ENCODE measurements at regions of chr11 and their contacts with region 1.

Region 1: GRCh38 chr11:4433856-4434255 is 15.2 kb upstream of the OR52K2 start:
- DNase-seq: no peak
- H3K4me3 ChIP-seq: no peak overlapping the region
- H3K27ac ChIP-seq: no peak overlapping the region
- H3K27me3 ChIP-seq: peaks cover 0 to 3% (median 0%) of the 10 kb centered on the region in 45 donors
- CTCF ChIP-seq: no peak

Region 2: GRCh38 chr11:4418403-4418802 is 15.5 kb before region 1 on chr11:
- intact Hi-C with region 1: no loop called
- DNase-seq: no peak
- H3K4me3 ChIP-seq: no peak overlapping the region
- H3K27ac ChIP-seq: no peak overlapping the region
- H3K27me3 ChIP-seq: peaks cover 0 to 5% (median 0%) of the 10 kb centered on the region in 45 donors
- CTCF ChIP-seq: no peak

Region 3: DNA sequence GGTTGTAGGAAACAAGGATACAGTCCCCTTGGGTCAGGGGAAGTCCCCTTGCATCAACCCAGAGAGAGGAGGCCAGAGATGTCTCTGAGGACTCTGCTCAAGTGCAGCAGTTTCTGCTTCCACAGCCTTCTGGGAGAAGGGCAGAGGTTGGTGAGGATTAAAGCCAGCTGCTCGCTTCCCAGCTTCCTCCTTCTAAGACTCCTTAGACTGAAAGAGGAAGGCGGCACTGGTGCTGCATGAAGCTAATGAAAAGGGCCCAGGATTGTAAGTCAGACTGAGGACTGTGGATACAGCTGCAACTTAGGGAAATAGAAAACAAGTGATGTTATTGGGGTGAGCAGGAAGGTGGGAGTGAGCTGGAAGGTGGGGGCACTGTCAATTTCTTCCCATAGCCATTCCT is 48.6 kb after region 1 on chr11 and contains the start of gene OR52K1:
- intact Hi-C with region 1: no loop called
- DNase-seq: no peak
- H3K4me3 ChIP-seq: no peak within 1 kb of the TSS
- H3K27ac ChIP-seq: peak within 1 kb of the TSS in 1 of 59 donors; percentile 33
- H3K27me3 ChIP-seq: no peaks in the 10 kb centered on the region
- CTCF ChIP-seq: no peak
- total RNA-seq, gene OR52K1: 0.07 to 0.96 (median 0.17) TPM in 55 of 120 experiments, not detected in the others

Region 4: GRCh38 chr11:4839851-4840549 is 406.1 kb after region 1 on chr11:
- intact Hi-C with region 1: loop called in 1 of 2 experiments (anchors 10 kb)
- DNase-seq: no peak
- H3K4me3 ChIP-seq: no peak overlapping the region
- H3K27ac ChIP-seq: no peak overlapping the region
- H3K27me3 ChIP-seq: peaks cover 0 to 17% (median 0%) of the 10 kb centered on the region in 45 donors
- CTCF ChIP-seq: no peak

Measured in dorsolateral prefrontal cortex (tissue), 120 donors.